Activated CD4-positive, alpha-beta T cell treated with anti-CD3 and anti-CD28 coated beads, Interleukin-2, amount 10 ng/mL, durations not matched to agents 24 days and 14 days (primary cell): ENCODE measurements at regions of chr6 and their contacts with region 1.

Region 1: GRCh38 chr6:142692942-142693341 is 252.0 kb downstream of the HIVEP2 start:
- DNase-seq: peak; percentile 88
- H3K4me3 Mint-ChIP-seq: no peak overlapping the region
- H3K27ac Mint-ChIP-seq: peak overlapping the region; percentile 2
- H3K4me1 Mint-ChIP-seq: peaks cover 15% of the 10 kb centered on the region
- H3K27me3 Mint-ChIP-seq: no peaks in the 10 kb centered on the region

Region 2: GRCh38 chr6:142802124-142802523 is 109.2 kb after region 1 on chr6:
- intact Hi-C with region 1: no loop called
- DNase-seq: no peak
- H3K4me3 Mint-ChIP-seq: peak overlapping the region; percentile 52
- H3K27ac Mint-ChIP-seq: peak overlapping the region; percentile 82
- H3K4me1 Mint-ChIP-seq: peaks cover 54% of the 10 kb centered on the region
- H3K27me3 Mint-ChIP-seq: no peaks in the 10 kb centered on the region

Region 3: GRCh38 chr6:143026696-143027449 is 333.9 kb after region 1 on chr6:
- intact Hi-C with region 1: loop called (anchors 1 kb)
- DNase-seq: peak; percentile 82
- H3K4me3 Mint-ChIP-seq: no peak overlapping the region
- H3K27ac Mint-ChIP-seq: no peak overlapping the region
- H3K4me1 Mint-ChIP-seq: peaks cover 4% of the 10 kb centered on the region
- H3K27me3 Mint-ChIP-seq: no peaks in the 10 kb centered on the region

Region 4: GRCh38 chr6:143337201-143337949 is 644.4 kb after region 1 on chr6:
- intact Hi-C with region 1: loop called (anchors 1 kb)
- DNase-seq: peak; percentile 82
- H3K4me3 Mint-ChIP-seq: no peak overlapping the region
- H3K27ac Mint-ChIP-seq: no peak overlapping the region
- H3K4me1 Mint-ChIP-seq: peaks cover 5% of the 10 kb centered on the region
- H3K27me3 Mint-ChIP-seq: no peaks in the 10 kb centered on the region

Region 5: GRCh38 chr6:143427109-143427817 is 734.3 kb after region 1 on chr6:
- intact Hi-C with region 1: loop called (anchors 1 kb)
- DNase-seq: peak; percentile 92
- H3K4me3 Mint-ChIP-seq: no peak overlapping the region
- H3K27ac Mint-ChIP-seq: no peak overlapping the region
- H3K4me1 Mint-ChIP-seq: peaks cover 9% of the 10 kb centered on the region
- H3K27me3 Mint-ChIP-seq: no peaks in the 10 kb centered on the region